Gastrocnemius medialis (tissue), 4 donors: ENCODE measurements at regions of chr9 and their contacts with region 1.

Region 1: GRCh38 chr9:693201-694091 is 148.1 kb upstream of the DMRT1 start:
- DNase-seq: peak; percentile 74 to 81
- ATAC-seq: peak; percentile 76 to 77
- H3K4me3 ChIP-seq: peak overlapping the region; percentile 47 to 56 (median 52)
- H3K27ac ChIP-seq: peak overlapping the region; percentile 87 to 95 (median 92)
- H3K4me1 ChIP-seq: peaks cover 65 to 68% of the 10 kb centered on the region in 2 donors
- H3K27me3 ChIP-seq: no peaks in the 10 kb centered on the region
- CTCF ChIP-seq: no peak
- POLR2A ChIP-seq: peak; percentile 68 to 76

Region 2: DNA sequence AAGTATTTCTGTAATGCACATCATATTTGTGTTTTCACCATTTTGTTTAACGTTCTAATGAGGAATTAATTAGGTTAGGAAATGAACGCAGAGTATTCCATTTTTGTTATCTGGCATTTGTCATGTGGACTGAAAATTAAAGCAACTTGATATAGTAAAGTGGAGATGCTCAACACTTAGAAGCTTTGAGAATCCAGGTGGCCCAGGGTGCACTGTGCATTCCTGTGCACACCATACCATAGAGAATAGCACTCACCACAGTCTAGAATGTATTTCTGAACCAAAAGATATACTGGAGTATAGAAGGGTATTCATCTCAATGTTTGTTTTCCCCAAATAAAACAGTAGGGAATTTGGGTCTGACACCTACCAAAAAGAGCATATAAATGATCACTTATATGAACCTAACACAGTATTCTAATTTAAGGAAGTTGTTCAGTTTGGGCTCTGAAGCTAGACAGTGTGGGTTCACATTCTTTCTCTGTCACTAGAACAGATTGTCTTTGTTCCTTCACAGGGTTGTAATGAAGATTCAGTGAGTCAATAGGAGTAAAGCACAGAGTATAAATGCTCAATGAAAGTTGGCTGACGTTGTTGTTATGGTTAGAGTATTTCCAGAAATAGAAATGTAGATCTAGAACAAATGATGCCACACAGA is 22.4 kb after region 1 on chr9:
- in situ Hi-C with region 1: no loop called
- intact Hi-C with region 1: loop called (anchors 2 kb)
- DNase-seq: no peak
- ATAC-seq: peak; percentile 90 to 92
- H3K4me3 ChIP-seq: peak overlapping the region in 1 of 4 donors; percentile 5
- H3K27ac ChIP-seq: peak overlapping the region; percentile 81 to 90 (median 83)
- H3K4me1 ChIP-seq: peaks cover 54 to 66% of the 10 kb centered on the region in 2 donors
- H3K27me3 ChIP-seq: no peaks in the 10 kb centered on the region
- CTCF ChIP-seq: no peak
- POLR2A ChIP-seq: peak; percentile 15 to 43

Region 3: GRCh38 chr9:744790-745484 is 51.5 kb after region 1 on chr9:
- in situ Hi-C with region 1: no loop called
- intact Hi-C with region 1: loop called (anchors 2 kb)
- DNase-seq: peak; percentile 89 to 96
- ATAC-seq: peak; percentile 90 to 97
- H3K4me3 ChIP-seq: no peak overlapping the region
- H3K27ac ChIP-seq: peak overlapping the region; percentile 79 to 88 (median 80)
- H3K4me1 ChIP-seq: peaks cover 36% of the 10 kb centered on the region in 2 donors
- H3K27me3 ChIP-seq: no peaks in the 10 kb centered on the region
- CTCF ChIP-seq: no peak
- POLR2A ChIP-seq: no peak

Region 4: DNA sequence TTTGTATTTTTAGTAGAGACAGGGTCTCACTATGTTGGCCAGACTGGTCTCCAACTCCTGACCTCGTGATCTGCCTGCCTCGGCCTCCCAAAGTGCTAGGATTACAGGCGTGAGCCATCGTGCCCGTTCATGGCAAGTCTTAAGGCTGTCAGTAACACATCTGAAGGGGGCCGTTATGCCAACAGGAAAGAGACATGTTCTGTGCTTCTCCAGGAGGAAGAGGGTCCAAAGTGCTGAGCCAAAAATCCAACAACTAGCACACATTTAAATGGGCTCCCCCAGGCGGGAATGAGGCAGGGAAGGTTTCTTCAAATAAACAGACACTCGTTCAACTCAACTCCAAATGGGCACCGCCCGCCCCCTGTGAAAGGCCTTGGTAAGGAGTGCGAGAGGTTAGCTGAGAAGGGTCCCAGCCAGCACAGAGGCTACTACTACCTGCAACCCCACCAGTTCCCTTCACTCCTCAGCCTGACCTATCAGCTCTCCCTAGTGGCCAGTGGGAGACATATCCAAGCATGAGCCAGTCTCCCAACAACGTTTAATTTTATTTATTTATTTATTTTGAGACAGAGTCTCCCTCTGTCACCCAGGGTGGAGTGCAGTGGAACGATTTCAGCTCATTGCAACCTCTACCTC is 63.9 kb after region 1 on chr9:
- in situ Hi-C with region 1: no loop called
- intact Hi-C with region 1: loop called (anchors 2 kb)
- DNase-seq: no peak
- ATAC-seq: peak; percentile 32 to 66
- H3K4me3 ChIP-seq: no peak overlapping the region
- H3K27ac ChIP-seq: no peak overlapping the region
- H3K4me1 ChIP-seq: peaks cover 9 to 11% of the 10 kb centered on the region in 2 donors
- H3K27me3 ChIP-seq: no peaks in the 10 kb centered on the region
- CTCF ChIP-seq: peak; percentile 31 to 61 (median 41)
- POLR2A ChIP-seq: no peak

Region 5: GRCh38 chr9:859251-859650 is 165.8 kb after region 1 on chr9:
- in situ Hi-C with region 1: no loop called
- intact Hi-C with region 1: no loop called
- DNase-seq: no peak
- ATAC-seq: no peak
- H3K4me3 ChIP-seq: no peak overlapping the region
- H3K27ac ChIP-seq: no peak overlapping the region
- H3K4me1 ChIP-seq: no peaks in the 10 kb centered on the region
- H3K27me3 ChIP-seq: peaks cover 0 to 2% (median 0%) of the 10 kb centered on the region in 3 donors
- CTCF ChIP-seq: no peak
- POLR2A ChIP-seq: no peak

Region 6: GRCh38 chr9:935344-935965 is 242.0 kb after region 1 on chr9:
- in situ Hi-C with region 1: no loop called
- intact Hi-C with region 1: no loop called
- DNase-seq: no peak
- ATAC-seq: no peak
- H3K4me3 ChIP-seq: no peak overlapping the region
- H3K27ac ChIP-seq: no peak overlapping the region
- H3K4me1 ChIP-seq: no peaks in the 10 kb centered on the region
- H3K27me3 ChIP-seq: peaks cover 0 to 17% (median 9%) of the 10 kb centered on the region in 3 donors
- CTCF ChIP-seq: no peak
- POLR2A ChIP-seq: no peak